Cardiac septum (tissue), 1 donor: ENCODE measurements at regions of chr6 and their contacts with region 1.

Region 1: DNA sequence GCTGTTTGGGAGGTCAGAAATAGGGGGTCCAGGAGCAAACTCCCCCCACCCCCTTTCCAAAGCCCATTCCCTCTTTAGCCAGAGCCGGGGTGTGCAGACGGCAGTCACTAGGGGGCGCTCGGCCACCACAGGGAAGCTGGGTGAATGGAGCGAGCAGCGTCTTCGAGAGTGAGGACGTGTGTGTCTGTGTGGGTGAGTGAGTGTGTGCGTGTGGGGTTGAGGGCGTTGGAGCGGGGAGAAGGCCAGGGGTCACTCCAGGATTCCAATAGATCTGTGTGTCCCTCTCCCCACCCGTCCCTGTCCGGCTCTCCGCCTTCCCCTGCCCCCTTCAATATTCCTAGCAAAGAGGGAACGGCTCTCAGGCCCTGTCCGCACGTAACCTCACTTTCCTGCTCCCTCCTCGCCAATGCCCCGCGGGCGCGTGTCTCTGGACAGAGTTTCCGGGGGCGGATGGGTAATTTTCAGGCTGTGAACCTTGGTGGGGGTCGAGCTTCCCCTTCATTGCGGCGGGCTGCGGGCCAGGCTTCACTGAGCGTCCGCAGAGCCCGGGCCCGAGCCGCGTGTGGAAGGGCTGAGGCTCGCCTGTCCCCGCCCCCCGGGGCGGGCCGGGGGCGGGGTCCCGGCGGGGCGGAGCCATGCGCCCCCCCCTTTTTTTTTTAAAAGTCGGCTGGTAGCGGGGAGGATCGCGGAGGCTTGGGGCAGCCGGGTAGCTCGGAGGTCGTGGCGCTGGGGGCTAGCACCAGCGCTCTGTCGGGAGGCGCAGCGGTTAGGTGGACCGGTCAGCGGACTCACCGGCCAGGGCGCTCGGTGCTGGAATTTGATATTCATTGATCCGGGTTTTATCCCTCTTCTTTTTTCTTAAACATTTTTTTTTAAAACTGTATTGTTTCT is at the start of gene VEGFA:
- DNase-seq: peak; percentile 96
- total RNA-seq, gene VEGFA: 233 TPM

Region 2: GRCh38 chr6:43667245-43668150 is 102.3 kb before region 1 on chr6:
- intact Hi-C with region 1: loop called (anchors 2 kb)
- DNase-seq: peak; percentile 90

Region 3: GRCh38 chr6:43817192-43817591 is 47.4 kb after region 1 on chr6:
- intact Hi-C with region 1: loop called (anchors 2 kb)
- DNase-seq: no peak

Region 4: GRCh38 chr6:43990627-43991619 is 221.2 kb after region 1 on chr6:
- intact Hi-C with region 1: loop called (anchors 5 kb)
- DNase-seq: no peak

Region 5: GRCh38 chr6:44211284-44211683 is 441.5 kb after region 1 on chr6:
- intact Hi-C with region 1: no loop called
- DNase-seq: no peak

Region 6: DNA sequence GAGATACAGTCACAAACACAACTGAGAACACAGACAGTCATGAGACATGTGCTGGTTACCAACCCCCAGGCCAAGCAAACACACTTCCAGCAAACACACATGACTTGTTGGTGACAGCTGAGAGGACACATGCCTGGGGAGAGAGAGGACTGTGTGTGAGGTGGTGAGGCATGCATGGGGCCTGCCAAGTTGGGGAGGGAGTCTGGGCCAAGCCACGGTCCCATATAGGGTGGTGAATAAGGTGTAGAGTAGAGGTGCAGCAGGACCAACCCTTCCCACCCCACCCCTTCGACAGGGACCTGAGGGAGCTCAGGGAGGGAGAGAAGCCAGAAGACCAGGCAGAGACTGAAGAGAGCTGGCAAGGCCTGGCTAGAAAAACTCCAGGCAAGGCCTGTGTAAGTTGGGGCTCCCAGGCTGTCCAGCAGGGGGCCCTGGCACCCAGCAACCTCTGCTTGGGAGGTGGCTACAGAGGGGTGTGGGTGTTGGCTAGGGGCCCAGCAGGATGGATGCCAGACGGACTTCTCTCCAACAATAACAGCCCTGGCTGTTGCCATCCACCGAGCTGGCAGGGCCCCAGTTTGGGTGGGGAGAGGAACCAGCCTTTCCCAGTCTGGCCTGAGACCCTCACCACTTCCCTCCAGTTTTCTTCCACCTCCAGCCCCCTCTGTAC is 451.7 kb after region 1 on chr6:
- intact Hi-C with region 1: loop called (anchors 10 kb)
- DNase-seq: peak; percentile 95